Activated CD4-positive, alpha-beta T cell treated with anti-CD3 and anti-CD28 coated beads for 36 hours (primary cell): ENCODE measurements at regions of chr20 and their contacts with region 1.

Region 1: GRCh38 chr20:4869290-4870193 is 131.8 kb downstream of the SLC23A2 start:
- DNase-seq: no peak
- ATAC-seq: peak; percentile 53
- H3K4me3 Mint-ChIP-seq: no peak overlapping the region
- H3K27ac Mint-ChIP-seq: peak overlapping the region; percentile 13
- H3K4me1 Mint-ChIP-seq: peaks cover 11% of the 10 kb centered on the region
- H3K27me3 Mint-ChIP-seq: no peaks in the 10 kb centered on the region

Region 2: GRCh38 chr20:4780245-4780644 is 89.3 kb before region 1 on chr20:
- CTCF ChIA-PET with region 1: no interaction called
- POLR2A ChIA-PET with region 1: interaction called, 5 read pairs
- intact Hi-C with region 1: loop called in 1 of 2 experiments (anchors 5 kb)
- DNase-seq: no peak
- ATAC-seq: no peak
- H3K4me3 Mint-ChIP-seq: no peak overlapping the region
- H3K27ac Mint-ChIP-seq: no peak overlapping the region
- H3K4me1 Mint-ChIP-seq: peaks cover 5% of the 10 kb centered on the region
- H3K27me3 Mint-ChIP-seq: no peaks in the 10 kb centered on the region

Region 3: GRCh38 chr20:4855555-4855954 is 14.0 kb before region 1 on chr20:
- CTCF ChIA-PET with region 1: no interaction called
- POLR2A ChIA-PET with region 1: no interaction called
- intact Hi-C with region 1: no loop called
- DNase-seq: no peak
- ATAC-seq: no peak
- H3K4me3 Mint-ChIP-seq: no peak overlapping the region
- H3K27ac Mint-ChIP-seq: no peak overlapping the region
- H3K4me1 Mint-ChIP-seq: no peaks in the 10 kb centered on the region
- H3K27me3 Mint-ChIP-seq: no peaks in the 10 kb centered on the region

Region 4: DNA sequence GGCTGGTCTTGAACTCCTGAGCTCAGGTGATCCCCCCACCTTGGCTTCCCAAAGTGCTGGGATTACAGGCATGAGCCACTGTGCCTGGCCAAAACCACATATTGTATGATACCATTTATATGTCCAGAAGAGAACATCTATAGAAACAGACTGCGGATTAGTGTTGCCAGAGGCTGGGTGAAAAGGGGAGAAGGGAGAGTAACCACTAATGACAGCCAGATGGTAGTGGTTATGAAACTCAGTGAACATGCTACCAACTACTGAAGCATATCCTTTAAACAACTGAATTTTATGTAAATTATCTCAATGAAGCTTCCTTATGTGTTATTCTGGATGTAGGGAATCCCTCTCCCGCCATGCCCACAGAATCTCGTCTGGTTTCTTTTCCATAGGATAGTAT is 116.1 kb after region 1 on chr20:
- CTCF ChIA-PET with region 1: no interaction called
- POLR2A ChIA-PET with region 1: no interaction called
- intact Hi-C with region 1: no loop called
- DNase-seq: no peak
- ATAC-seq: no peak
- H3K4me3 Mint-ChIP-seq: no peak overlapping the region
- H3K27ac Mint-ChIP-seq: no peak overlapping the region
- H3K4me1 Mint-ChIP-seq: peaks cover 34% of the 10 kb centered on the region
- H3K27me3 Mint-ChIP-seq: no peaks in the 10 kb centered on the region